Activated naive CD4-positive, alpha-beta T cell treated with anti-CD3 and anti-CD28 coated beads, Interleukin-2, amount 10 ng/mL, durations not matched to agents 7 days and 5 days (primary cell): ENCODE measurements at regions of chr17 and their contacts with region 1.

Region 1: GRCh38 chr17:43753493-43754129 is 5.0 kb downstream of the SOST start:
- DNase-seq: no peak
- H3K4me3 Mint-ChIP-seq: no peak overlapping the region
- H3K27ac Mint-ChIP-seq: no peak overlapping the region
- H3K4me1 Mint-ChIP-seq: peaks cover 15% of the 10 kb centered on the region
- H3K27me3 Mint-ChIP-seq: peaks cover 92% of the 10 kb centered on the region

Region 2: DNA sequence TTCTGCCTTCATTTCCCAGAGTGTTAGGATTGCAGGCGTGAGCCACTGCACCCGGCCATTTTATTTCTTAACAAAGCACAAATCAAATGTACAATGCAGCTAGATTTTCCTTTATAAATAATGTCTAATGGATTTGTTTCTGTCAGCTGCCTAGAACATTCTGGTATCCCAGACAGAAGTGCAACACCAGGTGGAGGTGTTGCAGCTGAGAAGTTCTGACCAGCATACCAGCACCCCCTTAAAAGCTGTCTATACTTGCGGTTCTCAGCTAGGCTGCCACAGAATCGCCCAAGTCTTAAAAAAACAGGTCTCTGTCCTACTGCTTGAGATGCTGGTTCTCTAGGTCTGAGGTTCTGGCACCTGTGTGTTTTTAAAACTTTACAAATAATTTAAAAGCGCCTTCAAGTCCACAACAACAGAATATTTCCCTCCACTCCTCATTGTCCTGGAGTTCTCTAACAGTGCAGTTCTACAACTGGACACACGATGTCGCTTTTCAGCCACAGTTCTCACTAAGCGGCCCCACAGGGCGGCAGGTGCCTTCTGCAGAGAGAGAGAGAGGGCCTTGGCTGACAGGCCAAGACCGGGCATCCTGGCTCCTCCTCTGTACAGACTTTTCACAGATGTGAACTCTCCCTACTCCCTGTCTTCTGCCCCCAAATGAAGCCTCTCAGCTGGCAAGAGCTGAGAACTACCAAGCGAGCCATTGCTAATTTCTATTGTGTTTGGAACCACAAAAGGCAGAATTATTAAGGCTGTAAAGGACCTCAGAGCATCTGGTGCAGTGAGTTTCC is 59.3 kb before region 1 on chr17:
- CTCF ChIA-PET with region 1: interaction called, 445 read pairs
- DNase-seq: peak; percentile 85
- H3K4me3 Mint-ChIP-seq: no peak overlapping the region
- H3K27ac Mint-ChIP-seq: no peak overlapping the region
- H3K4me1 Mint-ChIP-seq: no peaks in the 10 kb centered on the region
- H3K27me3 Mint-ChIP-seq: peaks cover 24% of the 10 kb centered on the region